ENCODE measurements at regions of chr12 and their contacts with region 1.

Region 1: DNA sequence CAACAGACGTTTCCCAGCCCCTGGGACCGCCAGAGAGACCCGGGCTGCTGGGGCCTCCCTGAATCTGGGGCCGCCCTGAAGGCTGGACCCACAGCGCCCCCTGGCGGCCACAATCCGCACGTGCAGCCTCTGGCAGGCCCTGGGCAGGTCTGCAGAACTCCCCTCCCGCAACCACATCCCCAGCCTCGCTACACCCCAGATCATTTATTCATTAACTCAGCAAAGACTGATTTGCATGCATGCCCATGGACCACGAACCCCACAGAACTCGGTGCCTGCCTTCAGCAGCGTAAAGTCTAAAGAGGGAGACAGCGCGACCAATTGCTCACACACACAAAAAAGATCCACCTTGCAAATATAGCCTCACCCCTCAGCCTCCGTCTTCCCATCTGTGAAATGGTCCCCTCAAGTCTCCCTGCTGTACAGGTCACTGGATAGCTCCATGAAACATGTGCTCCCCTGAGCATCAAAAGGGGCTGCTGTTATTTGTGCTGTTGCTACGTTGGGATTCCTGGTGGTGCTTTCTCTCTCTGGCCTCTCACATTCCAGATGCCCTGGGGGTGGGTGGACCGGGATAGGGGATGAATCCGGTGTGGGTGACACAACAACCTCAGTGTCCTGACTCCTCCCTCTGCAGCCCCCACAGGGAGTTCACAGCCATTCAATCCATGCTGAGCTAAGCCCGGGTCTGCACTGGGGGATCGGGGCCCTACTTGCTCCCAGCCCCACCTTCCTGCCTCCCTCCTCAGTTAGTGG is 96.4 kb downstream of the SCARB1 start:
- DNase-seq: peak; percentile 83
- H3K4me3 ChIP-seq: no peak overlapping the region
- H3K27ac ChIP-seq: peak overlapping the region; percentile 80 to 83 (median 82)
- H3K4me1 ChIP-seq: peaks cover 5 to 36% (median 26%) of the 10 kb centered on the region in 4 donors
- H3K27me3 ChIP-seq: no peaks in the 10 kb centered on the region
- CTCF ChIP-seq: peak; percentile 97 to 100 (median 100)
- EP300 ChIP-seq: no peak
- POLR2A ChIP-seq: no peak

Region 2: DNA sequence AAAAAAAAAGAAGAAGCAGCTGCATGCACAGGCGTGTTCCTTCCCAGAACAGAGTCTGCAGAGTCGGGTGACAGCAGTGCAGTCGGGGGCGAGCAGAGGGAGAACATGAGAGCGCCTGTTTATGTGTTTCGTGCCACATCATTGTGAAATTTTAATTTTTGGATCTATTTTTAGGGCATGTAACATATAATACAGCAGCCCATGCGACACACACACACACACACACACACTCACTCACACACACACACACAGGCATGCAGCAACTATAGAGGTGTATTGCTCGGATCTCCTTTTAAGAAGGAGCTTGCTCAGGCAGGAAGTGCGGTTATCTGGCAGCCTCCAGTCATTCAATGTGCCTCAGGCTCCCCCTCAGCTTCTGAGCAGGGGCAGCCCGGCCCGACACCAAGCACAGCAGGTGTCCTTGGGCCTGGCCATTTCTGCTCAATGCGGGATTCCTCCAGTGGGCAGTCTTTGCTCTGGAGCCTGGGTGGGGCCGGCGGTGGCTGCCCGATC is 722.4 kb before region 1 on chr12:
- in situ Hi-C with region 1: loop called in 2 of 4 experiments (anchors 10 kb)
- intact Hi-C with region 1: no loop called
- DNase-seq: no peak
- H3K4me3 ChIP-seq: no peak overlapping the region
- H3K27ac ChIP-seq: no peak overlapping the region
- H3K4me1 ChIP-seq: no peaks in the 10 kb centered on the region
- H3K27me3 ChIP-seq: no peaks in the 10 kb centered on the region
- CTCF ChIP-seq: no peak
- EP300 ChIP-seq: no peak
- POLR2A ChIP-seq: no peak

Region 3: DNA sequence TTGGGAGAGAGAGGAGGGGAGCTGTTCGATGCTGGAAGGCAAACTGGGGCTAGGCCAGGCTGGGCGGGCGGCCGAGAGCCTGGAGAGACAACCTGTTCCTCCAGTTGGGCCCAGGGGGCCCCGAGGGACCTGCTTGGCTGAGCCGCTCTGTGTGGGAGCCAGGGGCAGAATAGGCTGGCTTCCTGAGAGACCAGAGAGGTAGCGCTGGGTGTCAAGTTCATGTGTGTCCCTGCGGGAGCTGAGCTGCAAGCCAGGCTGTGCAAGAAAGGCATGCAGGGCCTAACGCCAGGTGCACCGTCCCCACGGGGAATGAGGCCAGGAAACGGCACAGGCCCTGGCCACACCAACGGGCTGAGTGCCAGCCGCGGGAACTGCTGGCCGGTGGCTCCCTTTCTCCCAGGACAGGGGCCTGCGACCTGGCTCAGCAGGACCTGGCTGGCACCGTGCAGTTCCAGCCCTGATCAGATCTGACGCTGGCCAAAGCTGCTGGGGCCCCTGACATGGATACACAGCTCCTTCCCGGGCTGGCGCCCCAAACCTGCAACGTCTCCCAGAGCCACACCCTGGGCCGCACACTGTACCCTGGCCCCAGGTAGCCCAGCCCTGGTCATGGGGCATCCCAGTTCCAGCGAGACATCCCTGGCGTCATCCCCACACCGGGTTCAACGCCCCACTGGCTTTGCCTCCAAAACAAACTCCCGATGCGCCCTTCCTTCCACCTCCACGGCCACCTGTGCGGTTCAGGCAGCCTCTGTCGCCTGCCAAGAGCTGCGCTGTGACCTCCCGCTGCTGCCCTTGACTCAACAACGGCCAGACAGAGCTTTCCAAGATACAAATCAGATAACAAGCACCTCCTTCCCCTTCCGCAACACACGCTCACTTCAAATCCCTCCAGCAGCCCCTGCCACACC is 407.3 kb before region 1 on chr12:
- in situ Hi-C with region 1: loop called in 1 of 4 experiments (anchors 25 kb)
- intact Hi-C with region 1: loop called (anchors 10 kb)
- DNase-seq: peak; percentile 78
- H3K4me3 ChIP-seq: no peak overlapping the region
- H3K27ac ChIP-seq: peak overlapping the region; percentile 55 to 82 (median 76)
- H3K4me1 ChIP-seq: peaks cover 15 to 26% (median 20%) of the 10 kb centered on the region in 4 donors
- H3K27me3 ChIP-seq: no peaks in the 10 kb centered on the region
- CTCF ChIP-seq: no peak
- EP300 ChIP-seq: no peak
- POLR2A ChIP-seq: no peak

Region 4: GRCh38 chr12:124388679-124389536 is 378.3 kb before region 1 on chr12:
- in situ Hi-C with region 1: loop called in 1 of 4 experiments (anchors 25 kb)
- intact Hi-C with region 1: no loop called
- DNase-seq: peak; percentile 85
- H3K4me3 ChIP-seq: peak overlapping the region; percentile 11 to 60 (median 35)
- H3K27ac ChIP-seq: peak overlapping the region; percentile 87 to 92 (median 91)
- H3K4me1 ChIP-seq: peaks cover 50 to 78% (median 62%) of the 10 kb centered on the region in 4 donors
- H3K27me3 ChIP-seq: no peaks in the 10 kb centered on the region
- CTCF ChIP-seq: peak in 1 of 5 experiments; percentile 14
- EP300 ChIP-seq: no peak
- POLR2A ChIP-seq: peak; percentile 49

Region 5: GRCh38 chr12:124567661-124568373 is 199.4 kb before region 1 on chr12:
- in situ Hi-C with region 1: loop called in 3 of 4 experiments (anchors 10 kb)
- intact Hi-C with region 1: no loop called
- DNase-seq: peak; percentile 92
- H3K4me3 ChIP-seq: peak overlapping the region; percentile 8 to 57 (median 38)
- H3K27ac ChIP-seq: peak overlapping the region; percentile 82 to 100 (median 88)
- H3K4me1 ChIP-seq: peaks cover 23 to 47% (median 41%) of the 10 kb centered on the region in 4 donors
- H3K27me3 ChIP-seq: no peaks in the 10 kb centered on the region
- CTCF ChIP-seq: no peak
- EP300 ChIP-seq: no peak
- POLR2A ChIP-seq: no peak

Region 6: DNA sequence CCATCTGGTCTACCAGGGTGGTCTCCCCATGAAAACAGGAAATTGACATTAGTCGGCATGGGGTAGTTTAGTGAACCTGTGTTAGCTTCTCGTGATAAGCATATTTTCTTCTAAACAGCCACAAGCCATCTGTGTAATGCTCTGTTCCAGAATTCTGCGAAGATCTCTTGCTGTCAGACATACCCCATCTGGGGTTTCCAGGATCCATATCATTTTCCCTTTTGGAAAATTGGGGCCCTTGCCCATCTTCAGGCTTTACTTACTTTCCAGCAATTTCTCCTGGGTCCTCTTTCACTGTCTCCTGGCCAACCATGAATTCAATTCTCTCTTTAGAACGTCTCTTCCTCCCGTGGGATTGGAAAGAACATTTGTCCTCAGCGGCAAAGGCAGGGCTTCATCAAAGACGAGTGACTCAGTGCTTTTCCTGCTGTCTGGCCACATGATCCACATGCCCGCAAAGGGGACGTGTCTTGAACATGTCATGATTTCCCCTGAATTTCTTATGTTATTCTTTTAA is 178.4 kb before region 1 on chr12:
- in situ Hi-C with region 1: loop called in 1 of 4 experiments (anchors 25 kb)
- intact Hi-C with region 1: no loop called
- DNase-seq: no peak
- H3K4me3 ChIP-seq: no peak overlapping the region
- H3K27ac ChIP-seq: peak overlapping the region in 3 of 4 donors; percentile 1 to 40 (median 15)
- H3K4me1 ChIP-seq: peaks cover 0 to 24% (median 5%) of the 10 kb centered on the region in 4 donors
- H3K27me3 ChIP-seq: no peaks in the 10 kb centered on the region
- CTCF ChIP-seq: no peak
- EP300 ChIP-seq: no peak
- POLR2A ChIP-seq: no peak

Region 7: DNA sequence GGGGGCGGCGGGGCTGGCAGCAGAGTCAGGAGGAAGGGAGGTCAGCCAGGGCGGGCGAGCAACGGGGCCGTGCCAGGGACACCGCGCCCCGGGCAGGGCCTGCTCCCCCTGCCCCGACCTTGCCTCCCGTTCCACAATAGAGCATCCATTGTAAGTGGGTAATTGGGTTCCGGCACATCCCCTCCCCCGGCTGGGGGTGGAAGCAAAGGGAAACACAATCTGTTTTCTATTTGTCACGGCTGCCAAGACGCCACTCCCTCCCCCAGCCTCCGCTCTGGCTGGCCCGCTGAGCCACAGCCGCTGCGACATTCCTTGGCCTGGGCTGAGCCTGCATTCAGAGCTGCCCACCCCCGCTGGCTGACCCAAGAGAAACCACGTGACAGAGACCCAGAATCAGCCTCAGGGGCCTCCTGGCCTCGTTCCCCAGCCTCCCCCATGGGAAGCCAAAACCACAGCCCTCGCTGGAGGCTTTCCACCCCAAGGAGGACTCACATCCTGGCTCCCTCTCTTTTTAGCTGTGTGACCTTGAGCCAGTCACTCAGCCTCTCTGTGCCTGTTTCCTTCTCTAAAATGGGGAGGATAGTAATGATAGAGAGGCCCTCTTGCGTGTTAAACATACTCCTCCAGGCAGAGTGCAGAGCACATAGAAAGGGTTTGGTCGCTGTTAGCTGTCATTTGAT is 21.2 kb before region 1 on chr12:
- in situ Hi-C with region 1: no loop called
- intact Hi-C with region 1: no loop called
- DNase-seq: peak; percentile 87
- H3K4me3 ChIP-seq: peak overlapping the region in 1 of 4 donors; percentile 1
- H3K27ac ChIP-seq: peak overlapping the region; percentile 79 to 90 (median 82)
- H3K4me1 ChIP-seq: peaks cover 20 to 27% (median 24%) of the 10 kb centered on the region in 4 donors
- H3K27me3 ChIP-seq: no peaks in the 10 kb centered on the region
- CTCF ChIP-seq: no peak
- EP300 ChIP-seq: peak; percentile 54
- POLR2A ChIP-seq: no peak

Measured in transverse colon (tissue), 4 donors.